PC-9 (cell line): ENCODE measurements at regions of chr2 and their contacts with region 1.

Region 1: GRCh38 chr2:70301344-70302194 is at the start of gene FAM136A:
- DNase-seq: peak; percentile 58 to 89
- H3K4me3 ChIP-seq: peak within 1 kb of the TSS; percentile 81
- H3K27ac ChIP-seq: peak within 1 kb of the TSS; percentile 70
- H3K4me1 ChIP-seq: no peaks in the 10 kb centered on the region; the same call in 1 of the 2 replicates
- H3K27me3 ChIP-seq: no peaks in the 10 kb centered on the region
- CTCF ChIP-seq: peak; percentile 90
- total RNA-seq, gene FAM136A: 38.5 and 39.3 TPM in 2 replicates

Region 2: GRCh38 chr2:70340921-70341765 is 39.6 kb after region 1 on chr2:
- CTCF ChIA-PET with region 1: interaction called, 3 read pairs
- POLR2A ChIA-PET with region 1: interaction called, 3 read pairs
- intact Hi-C with region 1: loop called (anchors 1 kb)
- DNase-seq: peak; percentile 65 to 70
- H3K4me3 ChIP-seq: no peak overlapping the region
- H3K27ac ChIP-seq: no peak overlapping the region
- H3K4me1 ChIP-seq: peaks cover 17% of the 10 kb centered on the region
- H3K27me3 ChIP-seq: no peaks in the 10 kb centered on the region
- CTCF ChIP-seq: peak; percentile 90

Region 3: GRCh38 chr2:70480468-70480867 is 178.9 kb after region 1 on chr2:
- CTCF ChIA-PET with region 1: no interaction called
- POLR2A ChIA-PET with region 1: no interaction called
- intact Hi-C with region 1: loop called (anchors 1 kb)
- DNase-seq: no peak
- H3K4me3 ChIP-seq: no peak overlapping the region
- H3K27ac ChIP-seq: no peak overlapping the region
- H3K4me1 ChIP-seq: peaks cover 28% of the 10 kb centered on the region
- H3K27me3 ChIP-seq: no peaks in the 10 kb centered on the region
- CTCF ChIP-seq: no peak

Region 4: DNA sequence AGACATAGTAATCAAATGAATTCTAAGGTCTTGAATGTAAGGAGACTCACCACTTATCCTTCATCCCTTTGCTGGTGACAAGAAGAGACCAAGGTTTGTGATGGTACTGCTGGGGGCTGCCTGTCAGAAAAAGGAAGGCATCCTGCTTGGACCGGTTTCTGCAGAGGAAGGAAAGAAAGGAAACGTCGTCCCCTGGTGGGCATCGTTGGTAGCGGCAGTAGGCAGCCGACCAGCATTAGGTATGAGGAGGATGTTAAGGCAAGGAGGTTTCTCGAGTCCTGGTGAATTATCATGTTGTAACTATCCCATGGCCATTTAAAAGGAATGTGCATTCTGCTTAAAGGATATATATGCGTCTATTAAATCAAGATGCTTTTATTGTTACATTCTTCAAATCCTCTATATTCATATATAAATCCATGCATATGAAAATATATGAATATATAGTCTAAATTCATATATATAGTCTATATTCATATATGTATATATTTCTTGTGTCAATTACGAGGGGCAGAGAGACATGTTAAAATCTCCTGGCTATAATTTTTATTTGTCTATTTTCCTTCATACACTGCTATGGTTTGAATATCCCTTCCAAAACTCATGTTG is 346.4 kb after region 1 on chr2:
- CTCF ChIA-PET with region 1: interaction called, 39 read pairs
- POLR2A ChIA-PET with region 1: interaction called, 4 read pairs
- intact Hi-C with region 1: loop called (anchors 1 kb)
- DNase-seq: peak; percentile 53 to 78
- H3K4me3 ChIP-seq: no peak overlapping the region
- H3K27ac ChIP-seq: no peak overlapping the region
- H3K4me1 ChIP-seq: no peaks in the 10 kb centered on the region
- H3K27me3 ChIP-seq: no peaks in the 10 kb centered on the region
- CTCF ChIP-seq: peak; percentile 95

Region 5: DNA sequence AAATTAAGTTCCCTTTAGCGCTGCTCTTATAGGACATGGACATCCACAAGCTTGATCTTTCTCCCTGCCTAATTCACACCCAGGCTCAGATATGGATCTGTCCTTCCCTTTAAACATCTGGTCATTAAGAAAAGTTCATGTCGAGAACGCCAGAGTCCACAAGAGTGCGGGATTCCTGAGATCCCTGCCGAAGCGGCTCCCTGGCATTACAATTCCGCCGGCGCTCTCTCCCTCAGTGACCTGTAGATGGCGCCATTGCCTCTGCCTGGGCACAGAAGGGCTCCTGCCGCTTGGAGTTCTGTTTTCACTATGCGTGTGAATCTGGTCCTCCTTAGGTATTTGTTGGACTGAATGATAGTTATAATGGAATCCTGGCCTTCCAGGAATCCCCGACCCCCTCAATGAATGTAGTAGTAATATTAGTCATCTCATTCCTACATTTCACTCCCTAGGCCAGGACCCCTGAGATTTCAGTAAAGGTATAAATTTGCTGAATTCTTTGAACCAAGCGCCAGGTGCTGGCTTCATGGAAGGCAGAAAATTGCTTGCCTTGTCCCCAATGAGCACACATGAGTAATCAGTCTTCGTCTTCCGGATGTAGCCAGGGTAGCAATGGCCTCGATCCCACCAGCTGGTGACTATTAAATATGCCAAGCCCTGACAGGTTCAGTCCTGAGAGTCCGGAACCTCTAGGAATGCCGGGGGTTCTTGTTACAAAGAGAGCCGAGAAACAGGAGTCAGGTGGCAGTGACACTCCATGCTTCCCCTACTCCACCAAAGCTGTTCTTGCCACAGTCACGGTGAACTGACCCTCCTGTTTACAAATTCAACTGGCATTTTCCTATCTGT is 560.4 kb after region 1 on chr2:
- CTCF ChIA-PET with region 1: no interaction called
- POLR2A ChIA-PET with region 1: no interaction called
- intact Hi-C with region 1: loop called (anchors 5 kb)
- DNase-seq: peak; percentile 59 to 86
- H3K4me3 ChIP-seq: no peak overlapping the region
- H3K27ac ChIP-seq: no peak overlapping the region
- H3K4me1 ChIP-seq: no peaks in the 10 kb centered on the region
- H3K27me3 ChIP-seq: peaks cover 30% of the 10 kb centered on the region
- CTCF ChIP-seq: peak; percentile 93

Region 6: DNA sequence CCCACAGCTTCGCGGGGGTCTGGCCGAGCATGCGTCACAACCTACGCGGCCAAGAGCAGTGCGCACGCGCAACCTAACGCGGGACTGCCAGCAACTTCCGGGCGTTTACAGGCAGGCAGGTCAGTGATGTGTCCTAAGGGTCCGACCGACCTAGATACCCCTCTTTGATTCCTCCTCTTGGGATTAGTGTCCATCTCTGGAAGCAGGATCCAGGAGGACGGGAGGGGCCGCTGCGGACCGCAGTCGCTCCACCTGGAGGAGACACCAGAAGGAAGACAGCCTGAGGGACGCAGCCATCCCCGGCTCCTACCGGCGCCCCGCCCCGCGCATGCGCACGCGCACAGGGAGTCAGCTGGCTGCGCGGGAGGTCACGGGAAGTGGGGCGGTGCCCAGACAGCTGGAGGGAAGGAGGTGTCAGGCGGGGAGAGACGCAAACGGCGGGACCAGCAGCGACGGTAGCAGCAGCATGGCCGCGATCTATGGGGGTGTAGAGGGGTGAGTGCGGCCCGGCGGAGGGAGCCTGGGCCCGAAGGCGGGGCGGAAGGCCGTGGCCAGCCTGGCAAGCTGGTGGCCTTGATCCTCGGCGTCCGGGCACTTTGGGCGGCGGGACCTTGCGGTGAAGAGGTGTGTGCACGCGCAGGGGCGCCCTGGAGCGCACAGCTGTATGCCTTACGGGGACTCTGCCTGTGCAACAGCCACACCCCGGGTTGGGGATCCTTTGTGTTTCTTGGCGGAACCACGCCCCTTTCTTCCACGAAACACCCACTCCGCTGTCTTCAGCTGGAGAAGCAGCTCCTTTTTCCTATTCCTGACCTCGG is 766.9 kb after region 1 on chr2 and contains the start of gene NAGK:
- CTCF ChIA-PET with region 1: interaction called, 13 read pairs
- POLR2A ChIA-PET with region 1: no interaction called
- intact Hi-C with region 1: no loop called
- DNase-seq: peak; percentile 86 to 96
- H3K4me3 ChIP-seq: peak within 1 kb of the TSS; percentile 72
- H3K27ac ChIP-seq: peak within 1 kb of the TSS; percentile 40
- H3K4me1 ChIP-seq: peaks cover 25% of the 10 kb centered on the region
- H3K27me3 ChIP-seq: no peaks in the 10 kb centered on the region
- CTCF ChIP-seq: no peak
- total RNA-seq, gene NAGK: 32.6 and 34.1 TPM in 2 replicates